Heart left ventricle (tissue), 16 donors: ENCODE measurements at regions of chr10 and their contacts with region 1.

Region 1: GRCh38 chr10:10014846-10015245 is 1002.8 kb upstream of the CELF2 start:
- DNase-seq: no peak
- ATAC-seq: no peak
- H3K4me3 ChIP-seq: no peak overlapping the region
- H3K27ac ChIP-seq: no peak overlapping the region
- H3K4me1 ChIP-seq: no peaks in the 10 kb centered on the region
- H3K27me3 ChIP-seq: no peaks in the 10 kb centered on the region
- CTCF ChIP-seq: no peak
- POLR2A ChIP-seq: no peak

Region 2: GRCh38 chr10:9743639-9744038 is 271.2 kb before region 1 on chr10:
- intact Hi-C with region 1: no loop called
- DNase-seq: no peak
- ATAC-seq: no peak
- H3K4me3 ChIP-seq: no peak overlapping the region
- H3K27ac ChIP-seq: no peak overlapping the region
- H3K4me1 ChIP-seq: no peaks in the 10 kb centered on the region
- H3K27me3 ChIP-seq: no peaks in the 10 kb centered on the region
- CTCF ChIP-seq: no peak
- POLR2A ChIP-seq: no peak

Region 3: DNA sequence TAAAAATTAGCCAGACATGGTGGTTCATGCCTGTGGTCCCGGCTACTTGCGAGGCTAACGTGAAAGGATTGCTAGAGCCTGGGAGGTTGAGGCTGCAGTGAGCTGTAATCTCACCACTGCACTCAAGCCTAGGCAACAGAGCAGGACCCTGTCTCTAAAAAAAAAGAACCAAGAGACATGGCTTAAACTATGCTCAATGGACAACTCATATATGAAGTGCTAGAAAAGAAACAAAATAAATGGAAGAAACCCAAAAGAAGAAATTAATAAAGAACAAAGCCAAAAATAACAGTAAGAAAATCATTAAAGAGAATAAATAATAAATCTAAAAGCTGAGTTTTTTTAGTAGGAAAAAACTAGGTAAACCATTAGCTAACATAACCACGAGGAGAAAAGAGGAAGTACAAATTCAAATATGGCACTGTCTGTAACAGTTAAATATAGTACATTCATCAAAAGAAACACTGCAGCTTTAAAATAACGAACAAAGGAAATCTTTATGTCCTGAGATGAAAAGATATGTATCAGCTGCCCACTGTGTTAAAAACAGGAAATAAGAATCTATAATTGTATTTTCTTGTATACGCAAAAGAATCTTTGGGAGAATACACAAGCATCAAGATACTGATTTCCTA is 1979.1 kb after region 1 on chr10:
- intact Hi-C with region 1: loop called in 1 of 10 experiments (anchors 10 kb)
- DNase-seq: no peak
- ATAC-seq: no peak
- H3K4me3 ChIP-seq: no peak overlapping the region
- H3K27ac ChIP-seq: no peak overlapping the region
- H3K4me1 ChIP-seq: peaks cover 0 to 9% (median 0%) of the 10 kb centered on the region in 12 donors
- H3K27me3 ChIP-seq: no peaks in the 10 kb centered on the region
- CTCF ChIP-seq: no peak
- POLR2A ChIP-seq: no peak